MCF 10A (cell line): ENCODE measurements at regions of chr1 and their contacts with region 1.

Region 1: GRCh38 chr1:155084722-155085503 is 6.3 kb downstream of the EFNA3 start:
- DNase-seq: peak; percentile 98
- H3K4me3 Mint-ChIP-seq: peak overlapping the region; percentile 100
- H3K27ac Mint-ChIP-seq: peak overlapping the region; percentile 96
- H3K4me1 Mint-ChIP-seq: peaks cover 28% of the 10 kb centered on the region
- H3K27me3 Mint-ChIP-seq: peaks cover 19% of the 10 kb centered on the region
- CTCF ChIP-seq: peak; percentile 89

Region 2: GRCh38 chr1:154906621-154907081 is 178.3 kb before region 1 on chr1:
- CTCF ChIA-PET with region 1: interaction called, 4 read pairs
- POLR2A ChIA-PET with region 1: no interaction called
- intact Hi-C with region 1: loop called (anchors 1 kb)
- DNase-seq: peak; percentile 57
- H3K4me3 Mint-ChIP-seq: no peak overlapping the region
- H3K27ac Mint-ChIP-seq: no peak overlapping the region
- H3K4me1 Mint-ChIP-seq: no peaks in the 10 kb centered on the region
- H3K27me3 Mint-ChIP-seq: no peaks in the 10 kb centered on the region
- CTCF ChIP-seq: peak; percentile 45

Region 3: DNA sequence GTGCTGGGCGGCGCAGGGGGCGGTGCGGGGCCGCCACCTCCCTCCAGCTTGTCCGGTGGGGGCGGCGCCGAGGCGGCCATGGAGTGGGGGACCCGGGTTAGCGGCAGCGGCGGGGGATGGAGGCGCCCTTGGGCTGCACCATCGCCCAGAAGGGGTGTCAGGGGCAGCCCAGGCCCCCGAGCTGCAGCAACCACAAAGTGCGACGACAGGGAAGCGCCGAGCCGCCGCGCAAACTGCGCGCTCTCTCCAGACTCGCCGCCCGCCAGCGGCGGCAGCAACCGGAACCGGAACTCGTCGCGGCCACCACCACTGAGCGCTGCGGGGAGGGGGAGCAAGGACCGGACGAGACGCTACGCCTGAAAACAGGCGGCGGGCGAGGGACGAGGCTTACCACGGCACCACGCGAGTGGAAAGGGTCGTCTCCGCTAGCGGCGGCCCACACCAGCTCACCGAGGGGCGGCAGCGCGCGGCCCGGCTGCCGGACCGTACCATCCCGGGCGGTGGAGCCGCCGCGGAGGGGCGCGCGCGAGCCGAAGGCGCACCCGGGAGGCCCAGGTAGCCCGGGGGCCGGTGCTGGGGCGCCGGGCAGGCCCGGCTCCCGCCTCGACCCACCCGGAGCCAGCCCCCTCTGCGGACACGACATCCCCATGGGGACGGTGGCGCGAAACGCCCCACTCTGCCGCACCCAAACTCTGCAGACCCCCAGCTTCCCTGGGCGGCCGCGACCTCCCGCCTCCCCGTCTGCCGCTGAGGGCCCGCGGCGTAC is 123.2 kb before region 1 on chr1 and contains the start of gene PYGO2:
- CTCF ChIA-PET with region 1: interaction called, 5 read pairs
- POLR2A ChIA-PET with region 1: interaction called, 15 read pairs
- intact Hi-C with region 1: no loop called
- DNase-seq: peak; percentile 85
- H3K4me3 Mint-ChIP-seq: peak within 1 kb of the TSS; percentile 73
- H3K27ac Mint-ChIP-seq: peak within 1 kb of the TSS; percentile 33
- H3K4me1 Mint-ChIP-seq: peaks cover 39% of the 10 kb centered on the region
- H3K27me3 Mint-ChIP-seq: no peaks in the 10 kb centered on the region
- CTCF ChIP-seq: peak; percentile 81
- total RNA-seq, gene PYGO2: 32.1 and 35.9 TPM in 2 replicates

Region 4: GRCh38 chr1:155001675-155002463 is 83.0 kb before region 1 on chr1:
- CTCF ChIA-PET with region 1: interaction called, 15 read pairs
- POLR2A ChIA-PET with region 1: interaction called, 7 read pairs
- intact Hi-C with region 1: loop called (anchors 1 kb)
- DNase-seq: peak; percentile 100
- H3K4me3 Mint-ChIP-seq: peak overlapping the region; percentile 90
- H3K27ac Mint-ChIP-seq: peak overlapping the region; percentile 97
- H3K4me1 Mint-ChIP-seq: peaks cover 52% of the 10 kb centered on the region
- H3K27me3 Mint-ChIP-seq: no peaks in the 10 kb centered on the region
- CTCF ChIP-seq: peak; percentile 34

Region 5: GRCh38 chr1:155063550-155064110 is 21.3 kb before region 1 on chr1 and contains the start of gene EFNA4:
- CTCF ChIA-PET with region 1: interaction called, 37 read pairs
- POLR2A ChIA-PET with region 1: interaction called, 22 read pairs
- intact Hi-C with region 1: loop called (anchors 1 kb)
- DNase-seq: peak; percentile 96
- H3K4me3 Mint-ChIP-seq: peak within 1 kb of the TSS; percentile 81
- H3K27ac Mint-ChIP-seq: peak within 1 kb of the TSS; percentile 3
- H3K4me1 Mint-ChIP-seq: peaks cover 31% of the 10 kb centered on the region
- H3K27me3 Mint-ChIP-seq: no peaks in the 10 kb centered on the region
- CTCF ChIP-seq: no peak
- total RNA-seq, gene EFNA4: 7.4 and 9.5 TPM in 2 replicates

Region 6: DNA sequence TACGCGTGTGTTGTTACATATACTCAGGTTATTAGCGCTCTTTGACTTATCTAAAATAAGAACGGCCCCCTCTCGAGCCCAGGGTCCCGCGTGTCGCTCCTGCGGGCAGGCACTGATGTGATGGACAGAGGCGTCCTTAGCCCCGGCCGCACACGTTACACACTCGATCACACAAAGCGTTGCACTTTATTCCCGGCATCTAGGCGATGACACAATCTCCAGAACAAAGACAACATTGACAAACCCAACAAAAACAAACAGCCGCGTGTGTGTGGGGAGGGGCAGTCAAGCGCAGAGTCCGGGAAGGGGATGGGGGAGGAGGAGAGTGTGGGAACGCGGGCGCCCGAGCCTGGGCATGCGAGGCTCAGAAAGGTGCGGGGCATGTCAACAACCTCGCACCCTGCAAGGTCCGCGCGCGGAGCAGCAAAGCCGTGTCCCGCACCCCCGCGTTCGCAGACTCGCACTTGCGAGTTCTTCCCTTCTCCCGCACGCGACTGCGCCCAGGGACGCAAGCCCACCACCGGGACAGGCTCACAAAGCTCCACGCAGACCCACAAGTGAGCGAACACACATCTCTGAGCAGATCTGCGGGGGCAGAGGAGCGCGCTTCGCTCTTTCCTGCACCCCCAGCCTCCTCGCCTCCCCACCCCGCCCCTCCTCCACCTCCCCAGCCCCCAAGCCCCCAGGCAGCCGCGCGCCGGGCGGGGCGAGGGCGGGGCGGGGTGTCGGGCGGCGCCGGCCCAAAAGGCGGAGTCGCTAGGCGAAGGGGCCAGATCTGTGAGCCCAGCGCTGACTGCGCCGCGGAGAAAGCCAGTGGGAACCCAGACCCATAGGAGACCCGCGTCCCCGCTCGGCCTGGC is 42.4 kb after region 1 on chr1 and contains the start of gene EFNA1:
- CTCF ChIA-PET with region 1: interaction called, 161 read pairs
- POLR2A ChIA-PET with region 1: interaction called, 35 read pairs
- intact Hi-C with region 1: no loop called
- DNase-seq: peak; percentile 99
- H3K4me3 Mint-ChIP-seq: peak within 1 kb of the TSS; percentile 100
- H3K27ac Mint-ChIP-seq: peak within 1 kb of the TSS; percentile 90
- H3K4me1 Mint-ChIP-seq: peaks cover 60% of the 10 kb centered on the region
- H3K27me3 Mint-ChIP-seq: no peaks in the 10 kb centered on the region
- CTCF ChIP-seq: no peak
- total RNA-seq, gene EFNA1: 38.9 and 42.3 TPM in 2 replicates

Region 7: DNA sequence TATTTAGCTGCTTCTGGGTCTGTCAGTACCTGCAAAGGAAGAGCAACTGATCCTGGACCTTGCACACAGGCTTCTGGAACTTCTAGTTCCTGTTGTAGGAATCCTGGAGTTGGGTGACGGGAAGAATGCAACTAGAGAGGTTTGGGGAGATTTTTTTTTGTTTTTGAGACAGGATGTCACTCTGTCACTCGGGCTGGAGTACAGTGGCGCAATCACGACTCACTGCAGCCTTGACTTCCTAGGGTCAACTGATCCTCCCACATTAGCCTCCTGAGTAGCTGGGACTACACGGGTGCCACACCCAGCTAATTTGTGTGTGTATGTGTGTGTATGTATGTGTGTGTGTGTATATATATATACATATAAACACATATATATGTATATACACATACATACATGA is 151.5 kb after region 1 on chr1:
- CTCF ChIA-PET with region 1: no interaction called
- POLR2A ChIA-PET with region 1: no interaction called
- intact Hi-C with region 1: no loop called
- DNase-seq: no peak
- H3K4me3 Mint-ChIP-seq: no peak overlapping the region
- H3K27ac Mint-ChIP-seq: no peak overlapping the region
- H3K4me1 Mint-ChIP-seq: peaks cover 11% of the 10 kb centered on the region
- H3K27me3 Mint-ChIP-seq: no peaks in the 10 kb centered on the region
- CTCF ChIP-seq: no peak